Activated B cell treated with CpG ODN at 0.5 μM for 24 hours (primary cell): ENCODE measurements at regions of chr16 and their contacts with region 1.

Region 1: GRCh38 chr16:87806603-87807546 is 41.1 kb upstream of the KLHDC4 start:
- DNase-seq: peak; percentile 55
- ATAC-seq: peak; percentile 43
- H3K4me3 Mint-ChIP-seq: peak overlapping the region; percentile 75
- H3K27ac Mint-ChIP-seq: peak overlapping the region; percentile 95
- H3K4me1 Mint-ChIP-seq: peaks cover 74% of the 10 kb centered on the region
- H3K27me3 Mint-ChIP-seq: no peaks in the 10 kb centered on the region
- CTCF ChIP-seq: no peak

Region 2: GRCh38 chr16:87740909-87741424 is 65.9 kb before region 1 on chr16:
- CTCF ChIA-PET with region 1: no interaction called
- POLR2A ChIA-PET with region 1: no interaction called
- intact Hi-C with region 1: no loop called
- DNase-seq: no peak
- ATAC-seq: no peak
- H3K4me3 Mint-ChIP-seq: no peak overlapping the region
- H3K27ac Mint-ChIP-seq: no peak overlapping the region
- H3K4me1 Mint-ChIP-seq: no peaks in the 10 kb centered on the region
- H3K27me3 Mint-ChIP-seq: no peaks in the 10 kb centered on the region
- CTCF ChIP-seq: no peak

Region 3: GRCh38 chr16:87793776-87794514 is 12.9 kb before region 1 on chr16:
- CTCF ChIA-PET with region 1: no interaction called
- POLR2A ChIA-PET with region 1: interaction called, 13 read pairs
- intact Hi-C with region 1: no loop called
- DNase-seq: no peak
- ATAC-seq: no peak
- H3K4me3 Mint-ChIP-seq: no peak overlapping the region
- H3K27ac Mint-ChIP-seq: no peak overlapping the region
- H3K4me1 Mint-ChIP-seq: no peaks in the 10 kb centered on the region
- H3K27me3 Mint-ChIP-seq: no peaks in the 10 kb centered on the region
- CTCF ChIP-seq: no peak

Region 4: DNA sequence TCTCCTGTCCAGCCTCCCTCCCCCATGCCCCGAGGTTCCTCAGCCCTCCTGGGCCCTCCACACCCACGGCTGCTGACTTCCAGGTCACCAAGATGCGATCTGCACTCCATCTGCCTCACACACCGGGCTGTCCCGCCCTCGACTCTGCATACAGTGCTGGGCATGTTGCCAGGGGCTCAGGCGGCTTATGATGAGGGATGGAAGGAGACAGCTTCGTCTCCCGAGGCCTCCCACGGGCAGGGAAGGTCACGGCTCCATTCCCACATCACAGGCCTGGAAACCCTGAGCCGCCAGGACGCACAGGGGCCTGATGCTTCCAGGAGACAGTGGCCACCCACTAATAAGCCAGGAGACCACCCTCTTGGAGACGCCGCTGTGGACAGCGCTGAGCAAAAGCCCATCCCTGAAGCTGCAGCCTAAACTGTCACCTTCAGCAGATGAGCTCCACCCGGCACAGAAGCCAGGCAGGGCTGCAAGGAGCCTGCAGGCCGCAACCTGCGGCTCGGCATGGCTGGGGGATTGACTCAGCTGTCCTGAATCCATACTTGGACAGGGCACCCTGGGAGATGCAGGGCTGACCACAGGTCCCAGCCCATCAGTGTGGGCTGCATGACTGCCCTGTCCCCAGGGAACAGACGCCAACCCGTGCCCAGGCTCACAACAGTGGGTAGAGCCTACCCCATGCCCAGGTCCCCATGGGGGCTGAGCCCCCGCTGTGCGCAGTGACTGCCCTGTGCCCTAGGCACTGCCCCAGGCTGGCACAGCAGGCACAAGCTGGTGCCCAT is 27.9 kb after region 1 on chr16:
- CTCF ChIA-PET with region 1: interaction called, 8 read pairs
- POLR2A ChIA-PET with region 1: interaction called, 39 read pairs
- intact Hi-C with region 1: loop called (anchors 1 kb)
- DNase-seq: no peak
- ATAC-seq: no peak
- H3K4me3 Mint-ChIP-seq: no peak overlapping the region
- H3K27ac Mint-ChIP-seq: no peak overlapping the region
- H3K4me1 Mint-ChIP-seq: peaks cover 26% of the 10 kb centered on the region
- H3K27me3 Mint-ChIP-seq: no peaks in the 10 kb centered on the region
- CTCF ChIP-seq: no peak

Region 5: GRCh38 chr16:87860553-87861299 is 53.9 kb after region 1 on chr16:
- CTCF ChIA-PET with region 1: interaction called, 5 read pairs
- POLR2A ChIA-PET with region 1: interaction called, 161 read pairs
- intact Hi-C with region 1: no loop called
- DNase-seq: no peak
- ATAC-seq: peak; percentile 40
- H3K4me3 Mint-ChIP-seq: no peak overlapping the region
- H3K27ac Mint-ChIP-seq: peak overlapping the region; percentile 56
- H3K4me1 Mint-ChIP-seq: peaks cover 30% of the 10 kb centered on the region
- H3K27me3 Mint-ChIP-seq: no peaks in the 10 kb centered on the region
- CTCF ChIP-seq: no peak

Region 6: GRCh38 chr16:88069397-88070168 is 262.7 kb after region 1 on chr16:
- CTCF ChIA-PET with region 1: no interaction called
- POLR2A ChIA-PET with region 1: no interaction called
- intact Hi-C with region 1: loop called (anchors 1 kb)
- DNase-seq: peak; percentile 79
- ATAC-seq: peak; percentile 93
- H3K4me3 Mint-ChIP-seq: peak overlapping the region; percentile 74
- H3K27ac Mint-ChIP-seq: peak overlapping the region; percentile 96
- H3K4me1 Mint-ChIP-seq: peaks cover 50% of the 10 kb centered on the region
- H3K27me3 Mint-ChIP-seq: no peaks in the 10 kb centered on the region
- CTCF ChIP-seq: no peak